PC-3 (cell line): ENCODE measurements at regions of chr12 and their contacts with region 1.

Region 1: DNA sequence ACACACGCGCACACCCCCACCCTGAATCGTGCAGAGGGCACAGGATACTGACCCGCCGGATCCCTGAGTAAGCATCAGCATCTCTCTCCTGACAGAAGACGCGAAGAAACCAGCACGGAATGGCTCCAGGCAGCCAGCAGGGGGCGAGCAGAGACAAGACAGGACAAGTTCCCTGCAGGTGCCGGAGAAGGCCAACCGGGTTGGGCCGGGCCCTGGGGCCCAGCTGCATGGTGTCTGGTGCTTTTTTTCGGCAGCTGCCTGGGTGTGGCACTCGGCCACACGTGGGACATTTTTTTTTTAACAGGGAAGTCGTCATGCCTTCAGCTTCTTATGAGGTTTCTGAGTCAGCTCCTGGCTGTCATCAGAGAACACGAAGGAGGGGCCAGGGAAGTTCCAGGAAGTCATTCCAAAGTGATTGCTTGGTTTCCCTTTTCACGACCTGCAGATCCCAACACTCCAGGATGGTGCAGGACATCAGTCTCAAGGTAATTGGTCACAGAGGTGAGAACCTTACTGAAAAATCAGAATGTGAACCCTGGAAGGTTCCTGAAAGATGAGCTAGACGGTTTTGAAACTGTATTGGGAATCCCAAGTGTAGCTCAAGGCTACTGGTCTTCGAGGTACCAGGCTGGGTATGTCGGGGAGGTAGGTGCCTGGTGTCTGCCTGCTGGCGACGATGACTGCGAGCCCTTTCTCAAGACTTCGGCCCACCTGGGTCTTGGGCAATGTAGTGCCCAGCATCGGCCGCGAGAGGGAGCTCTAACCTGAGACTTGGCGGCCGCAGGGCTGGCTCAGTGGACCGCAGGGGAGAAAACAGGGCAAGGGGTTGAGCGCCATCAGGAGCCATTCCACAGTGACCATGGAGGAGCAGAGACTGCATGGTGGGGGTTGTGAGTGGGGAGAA is 190.8 kb upstream of the PRMT8 start:
- DNase-seq: peak; percentile 96
- ATAC-seq: peak; percentile 61
- H3K4me3 ChIP-seq: peak overlapping the region; percentile 59
- H3K27ac ChIP-seq: peak overlapping the region; percentile 95
- H3K4me1 ChIP-seq: peaks cover 39% of the 10 kb centered on the region
- H3K27me3 ChIP-seq: no peaks in the 10 kb centered on the region
- CTCF ChIP-seq: peak; percentile 91

Region 2: DNA sequence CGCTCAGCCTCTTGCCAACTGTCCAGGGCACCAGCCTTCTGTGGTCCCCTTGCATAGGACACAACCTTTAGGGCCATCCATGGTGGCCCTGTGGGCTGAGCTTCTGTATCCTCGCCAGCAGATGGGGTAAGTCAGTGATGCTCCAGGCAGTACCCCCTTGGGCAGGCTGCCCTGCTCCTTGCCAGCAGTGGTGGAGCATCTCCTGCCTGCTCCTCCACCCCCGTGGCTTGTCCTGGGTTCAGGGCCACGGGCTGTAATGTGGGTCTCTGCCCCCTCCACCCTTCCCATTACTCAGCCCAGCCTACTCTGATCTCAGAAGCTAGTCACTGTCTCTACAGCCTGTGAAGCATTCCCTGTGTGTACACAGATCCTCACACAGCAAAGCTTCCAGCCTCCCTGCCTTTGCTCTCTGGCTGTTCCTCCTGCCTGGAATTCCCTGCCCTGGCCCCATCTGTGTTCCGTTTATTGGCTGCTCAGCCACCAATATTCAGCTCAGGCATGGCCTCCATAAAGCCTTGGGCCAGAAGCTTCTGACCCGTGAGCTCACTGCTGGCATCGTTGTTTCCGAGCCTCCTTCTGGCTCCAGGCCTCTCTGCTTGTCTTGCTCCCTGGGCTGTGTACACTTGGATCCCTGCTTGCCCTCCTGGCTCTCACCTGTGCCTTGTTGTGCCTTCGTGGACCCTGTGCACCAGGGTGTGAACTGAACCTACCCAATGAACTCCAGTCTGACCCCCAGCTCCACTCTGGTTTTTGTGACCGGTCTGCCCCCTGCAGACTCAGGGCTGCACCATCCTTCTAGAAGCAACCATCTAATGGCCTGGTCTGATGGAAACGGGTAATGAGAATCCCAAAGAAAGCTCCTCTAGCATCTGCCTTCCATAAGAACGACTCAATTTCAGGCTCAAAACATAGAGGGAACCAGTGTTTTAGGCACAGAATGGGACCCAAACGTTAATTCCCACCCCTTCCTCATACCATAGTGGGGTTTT is 13.8 kb after region 1 on chr12:
- CTCF ChIA-PET with region 1: interaction called, 19 read pairs
- POLR2A ChIA-PET with region 1: interaction called, 9 read pairs
- intact Hi-C with region 1: no loop called
- DNase-seq: peak; percentile 52
- ATAC-seq: no peak
- H3K4me3 ChIP-seq: no peak overlapping the region
- H3K27ac ChIP-seq: peak overlapping the region; percentile 44
- H3K4me1 ChIP-seq: peaks cover 75% of the 10 kb centered on the region
- H3K27me3 ChIP-seq: no peaks in the 10 kb centered on the region
- CTCF ChIP-seq: peak; percentile 52

Region 3: DNA sequence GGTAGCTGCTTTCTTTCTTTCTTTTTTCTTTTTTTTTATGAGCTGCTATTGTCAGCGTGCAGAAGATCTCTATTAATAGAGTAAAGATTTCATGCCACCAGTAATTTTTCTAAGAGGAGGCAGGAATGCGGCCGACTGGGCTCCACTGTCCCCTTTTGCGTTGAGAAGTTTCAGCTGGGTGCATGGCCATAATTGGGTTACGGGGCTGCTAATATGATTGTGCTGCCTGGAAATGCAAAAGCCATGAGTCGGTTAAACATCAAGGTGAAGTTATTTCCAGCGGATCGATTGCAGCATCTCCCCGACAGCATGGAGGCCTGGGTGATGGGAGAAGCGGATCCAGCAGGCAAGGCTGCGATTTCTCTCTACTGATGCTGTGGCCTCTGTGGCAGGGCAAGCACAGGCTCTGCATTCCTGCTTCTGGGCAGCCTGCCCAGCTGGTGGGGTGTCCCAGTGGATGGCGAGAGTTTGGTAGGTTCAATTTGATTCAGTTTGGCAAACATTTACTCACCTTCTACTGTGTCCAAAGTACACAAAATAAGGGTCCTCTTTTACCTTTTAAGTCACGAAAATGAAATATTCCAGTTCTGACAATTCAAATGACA is 136.4 kb after region 1 on chr12:
- CTCF ChIA-PET with region 1: no interaction called
- POLR2A ChIA-PET with region 1: no interaction called
- intact Hi-C with region 1: loop called (anchors 5 kb)
- DNase-seq: peak; percentile 89
- ATAC-seq: peak; percentile 96
- H3K4me3 ChIP-seq: no peak overlapping the region
- H3K27ac ChIP-seq: no peak overlapping the region
- H3K4me1 ChIP-seq: peaks cover 22% of the 10 kb centered on the region
- H3K27me3 ChIP-seq: no peaks in the 10 kb centered on the region
- CTCF ChIP-seq: no peak

Region 4: GRCh38 chr12:3463921-3464320 is 163.7 kb after region 1 on chr12:
- CTCF ChIA-PET with region 1: no interaction called
- POLR2A ChIA-PET with region 1: interaction called, 4 read pairs
- intact Hi-C with region 1: loop called (anchors 1 kb)
- DNase-seq: peak; percentile 47
- ATAC-seq: peak; percentile 95
- H3K4me3 ChIP-seq: peak overlapping the region; percentile 49
- H3K27ac ChIP-seq: no peak overlapping the region
- H3K4me1 ChIP-seq: peaks cover 12% of the 10 kb centered on the region
- H3K27me3 ChIP-seq: no peaks in the 10 kb centered on the region
- CTCF ChIP-seq: no peak

Region 5: DNA sequence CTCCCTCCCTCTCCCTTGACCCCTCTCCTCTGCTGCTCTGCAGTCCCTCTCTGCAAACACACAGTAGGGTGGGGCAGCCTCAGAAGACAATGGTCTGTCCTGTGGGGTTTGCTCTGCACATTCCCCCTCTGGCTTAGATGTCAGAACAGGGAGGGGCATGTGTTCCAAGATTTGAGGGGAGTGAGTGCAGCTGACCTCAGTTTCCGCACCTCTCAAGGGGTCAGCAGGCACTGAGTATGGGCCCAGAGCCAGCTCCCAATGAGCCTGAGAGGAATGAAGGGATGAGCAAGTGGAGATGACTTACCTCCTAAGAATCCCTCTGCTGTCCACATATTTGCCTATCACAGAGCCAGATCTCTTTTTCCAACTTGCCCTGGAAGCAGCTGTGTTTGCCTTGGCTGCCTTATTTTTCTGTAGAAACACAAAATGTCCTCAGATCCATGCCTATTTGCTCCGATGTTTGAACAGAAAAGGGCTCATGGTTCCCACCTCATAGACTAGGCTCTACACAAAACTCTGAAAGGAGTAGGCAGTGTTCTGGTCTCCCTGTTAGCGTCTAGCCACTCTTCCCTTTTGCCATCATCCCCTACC is 341.3 kb after region 1 on chr12:
- CTCF ChIA-PET with region 1: no interaction called
- POLR2A ChIA-PET with region 1: no interaction called
- intact Hi-C with region 1: loop called (anchors 5 kb)
- DNase-seq: peak; percentile 78
- ATAC-seq: peak; percentile 35; the same call in 1 of the 2 replicates
- H3K4me3 ChIP-seq: no peak overlapping the region
- H3K27ac ChIP-seq: no peak overlapping the region
- H3K4me1 ChIP-seq: peaks cover 11% of the 10 kb centered on the region
- H3K27me3 ChIP-seq: no peaks in the 10 kb centered on the region
- CTCF ChIP-seq: no peak

Region 6: GRCh38 chr12:3803865-3804472 is 503.8 kb after region 1 on chr12:
- CTCF ChIA-PET with region 1: interaction called, 16 read pairs
- POLR2A ChIA-PET with region 1: no interaction called
- intact Hi-C with region 1: loop called (anchors 1 kb)
- DNase-seq: peak; percentile 69
- ATAC-seq: peak; percentile 78
- H3K4me3 ChIP-seq: no peak overlapping the region
- H3K27ac ChIP-seq: no peak overlapping the region
- H3K4me1 ChIP-seq: no peaks in the 10 kb centered on the region
- H3K27me3 ChIP-seq: no peaks in the 10 kb centered on the region
- CTCF ChIP-seq: peak; percentile 89